Activated CD4-positive, alpha-beta T cell treated with anti-CD3 and anti-CD28 coated beads for 36 hours (primary cell): ENCODE measurements at regions of chr3 and their contacts with region 1.

Region 1: GRCh38 chr3:31253782-31254181 is 278.9 kb upstream of the STT3B start:
- DNase-seq: peak; percentile 65
- ATAC-seq: peak; percentile 45
- H3K4me3 Mint-ChIP-seq: peak overlapping the region; percentile 24
- H3K27ac Mint-ChIP-seq: peak overlapping the region; percentile 99
- H3K4me1 Mint-ChIP-seq: peaks cover 57% of the 10 kb centered on the region
- H3K27me3 Mint-ChIP-seq: peaks cover 4% of the 10 kb centered on the region

Region 2: DNA sequence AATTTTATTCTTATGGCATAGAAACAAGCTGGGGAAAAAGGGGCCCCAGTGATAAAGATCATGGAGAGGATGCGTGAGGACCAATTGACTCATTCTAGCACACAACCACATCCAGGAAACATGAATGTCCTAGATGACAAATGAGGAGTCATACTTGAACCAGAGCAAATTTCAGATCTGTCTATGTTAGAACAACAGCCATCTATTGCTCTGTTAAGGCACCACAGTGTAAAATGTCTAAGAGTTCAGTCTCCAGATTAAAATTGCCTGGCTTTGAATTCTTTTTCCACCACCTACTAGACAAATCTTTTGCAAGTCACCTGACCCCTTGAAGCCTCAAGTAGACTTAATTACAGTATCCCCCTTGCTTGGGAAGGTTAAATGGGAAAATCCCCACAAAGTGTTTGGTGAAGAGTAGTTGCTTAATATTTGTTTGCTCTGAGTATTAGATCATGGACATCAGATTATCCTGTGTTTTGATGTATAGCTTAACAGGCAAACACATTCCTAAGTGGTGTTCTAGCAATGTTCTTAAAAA is 906.0 kb before region 1 on chr3:
- CTCF ChIA-PET with region 1: no interaction called
- POLR2A ChIA-PET with region 1: no interaction called
- intact Hi-C with region 1: loop called in 1 of 2 experiments (anchors 2 kb)
- DNase-seq: peak; percentile 67
- ATAC-seq: peak; percentile 97
- H3K4me3 Mint-ChIP-seq: no peak overlapping the region
- H3K27ac Mint-ChIP-seq: peak overlapping the region; percentile 82
- H3K4me1 Mint-ChIP-seq: peaks cover 85% of the 10 kb centered on the region
- H3K27me3 Mint-ChIP-seq: peaks cover 8% of the 10 kb centered on the region

Region 3: DNA sequence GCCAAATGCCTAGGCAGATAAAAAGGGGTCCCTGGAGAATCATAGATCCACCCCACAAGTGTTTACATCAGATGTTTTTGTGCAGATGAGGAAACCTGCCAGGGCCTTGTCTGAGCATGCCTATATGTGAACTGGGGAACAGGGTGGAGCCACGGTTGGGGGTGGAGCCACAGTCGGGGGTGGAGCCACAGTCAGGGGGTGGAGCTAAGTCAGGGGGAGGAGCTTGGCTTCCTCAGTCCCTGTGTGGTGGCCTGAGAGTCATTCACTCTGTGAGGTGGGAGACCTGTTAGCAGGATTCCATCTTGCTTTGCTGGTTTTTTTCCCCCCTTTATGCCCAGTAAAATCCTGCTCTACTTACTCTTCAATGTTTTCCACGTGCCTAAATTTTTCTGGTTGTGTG is 705.2 kb before region 1 on chr3:
- CTCF ChIA-PET with region 1: no interaction called
- POLR2A ChIA-PET with region 1: no interaction called
- intact Hi-C with region 1: no loop called
- DNase-seq: peak; percentile 68
- ATAC-seq: peak; percentile 96
- H3K4me3 Mint-ChIP-seq: no peak overlapping the region
- H3K27ac Mint-ChIP-seq: no peak overlapping the region
- H3K4me1 Mint-ChIP-seq: peaks cover 41% of the 10 kb centered on the region
- H3K27me3 Mint-ChIP-seq: no peaks in the 10 kb centered on the region

Region 4: GRCh38 chr3:30606301-30607031 is 647.3 kb before region 1 on chr3 and contains the start of gene TGFBR2:
- CTCF ChIA-PET with region 1: no interaction called
- POLR2A ChIA-PET with region 1: no interaction called
- intact Hi-C with region 1: no loop called
- DNase-seq: peak; percentile 94
- ATAC-seq: peak; percentile 70
- H3K4me3 Mint-ChIP-seq: peak within 1 kb of the TSS; percentile 99
- H3K27ac Mint-ChIP-seq: peak within 1 kb of the TSS; percentile 95
- H3K4me1 Mint-ChIP-seq: peaks cover 60% of the 10 kb centered on the region
- H3K27me3 Mint-ChIP-seq: no peaks in the 10 kb centered on the region
- total RNA-seq, gene TGFBR2: 45.5 to 46.6 TPM

Region 5: GRCh38 chr3:30878862-30879261 is 374.9 kb before region 1 on chr3:
- CTCF ChIA-PET with region 1: no interaction called
- POLR2A ChIA-PET with region 1: no interaction called
- intact Hi-C with region 1: no loop called
- DNase-seq: no peak
- ATAC-seq: no peak
- H3K4me3 Mint-ChIP-seq: no peak overlapping the region
- H3K27ac Mint-ChIP-seq: no peak overlapping the region
- H3K4me1 Mint-ChIP-seq: no peaks in the 10 kb centered on the region
- H3K27me3 Mint-ChIP-seq: peaks cover 2% of the 10 kb centered on the region

Region 6: GRCh38 chr3:31077021-31077601 is 176.7 kb before region 1 on chr3:
- CTCF ChIA-PET with region 1: interaction called, 4 read pairs
- POLR2A ChIA-PET with region 1: no interaction called
- intact Hi-C with region 1: loop called (anchors 1 kb)
- DNase-seq: peak; percentile 68
- ATAC-seq: peak; percentile 98
- H3K4me3 Mint-ChIP-seq: no peak overlapping the region
- H3K27ac Mint-ChIP-seq: peak overlapping the region; percentile 52
- H3K4me1 Mint-ChIP-seq: peaks cover 26% of the 10 kb centered on the region
- H3K27me3 Mint-ChIP-seq: peaks cover 5% of the 10 kb centered on the region

Region 7: DNA sequence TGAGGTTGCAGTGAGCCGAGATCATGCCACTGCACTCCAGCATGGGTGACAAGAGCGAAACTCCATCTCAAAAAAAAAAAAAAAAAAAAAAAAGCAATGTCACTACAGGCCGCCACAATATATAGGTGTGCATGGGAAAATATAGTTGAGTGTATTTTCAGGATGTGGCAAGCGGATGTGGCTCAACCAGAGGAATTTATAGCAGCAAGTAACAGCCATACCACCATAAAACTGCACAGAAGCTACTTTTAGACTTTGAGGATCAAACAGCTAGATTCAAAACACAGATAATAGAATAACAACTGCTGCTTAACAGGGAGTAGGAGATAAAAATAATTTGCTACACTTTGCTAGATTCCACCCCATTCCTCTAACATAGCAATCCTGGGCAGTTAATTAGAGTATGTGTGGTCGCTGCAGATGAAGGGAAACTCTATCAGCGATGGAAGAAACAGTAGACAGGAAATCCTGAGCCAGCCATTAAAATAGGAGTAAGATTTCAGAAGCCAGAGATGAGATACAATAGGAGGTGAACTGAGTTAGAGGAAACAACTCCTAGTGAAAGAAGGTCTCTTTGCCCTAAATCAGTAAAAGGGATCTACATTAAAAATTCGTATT is 39.8 kb before region 1 on chr3:
- CTCF ChIA-PET with region 1: interaction called, 3 read pairs
- POLR2A ChIA-PET with region 1: no interaction called
- intact Hi-C with region 1: loop called (anchors 1 to 2 kb)
- DNase-seq: peak; percentile 48
- ATAC-seq: peak; percentile 4
- H3K4me3 Mint-ChIP-seq: no peak overlapping the region
- H3K27ac Mint-ChIP-seq: peak overlapping the region; percentile 82
- H3K4me1 Mint-ChIP-seq: peaks cover 90% of the 10 kb centered on the region
- H3K27me3 Mint-ChIP-seq: no peaks in the 10 kb centered on the region

Region 8: GRCh38 chr3:31232055-31233025 is 21.4 kb before region 1 on chr3:
- CTCF ChIA-PET with region 1: interaction called, 4 read pairs
- POLR2A ChIA-PET with region 1: no interaction called
- intact Hi-C with region 1: loop called in 1 of 2 experiments (anchors 2 kb)
- DNase-seq: no peak
- ATAC-seq: no peak
- H3K4me3 Mint-ChIP-seq: no peak overlapping the region
- H3K27ac Mint-ChIP-seq: peak overlapping the region; percentile 73
- H3K4me1 Mint-ChIP-seq: peaks cover 72% of the 10 kb centered on the region
- H3K27me3 Mint-ChIP-seq: no peaks in the 10 kb centered on the region

Region 9: DNA sequence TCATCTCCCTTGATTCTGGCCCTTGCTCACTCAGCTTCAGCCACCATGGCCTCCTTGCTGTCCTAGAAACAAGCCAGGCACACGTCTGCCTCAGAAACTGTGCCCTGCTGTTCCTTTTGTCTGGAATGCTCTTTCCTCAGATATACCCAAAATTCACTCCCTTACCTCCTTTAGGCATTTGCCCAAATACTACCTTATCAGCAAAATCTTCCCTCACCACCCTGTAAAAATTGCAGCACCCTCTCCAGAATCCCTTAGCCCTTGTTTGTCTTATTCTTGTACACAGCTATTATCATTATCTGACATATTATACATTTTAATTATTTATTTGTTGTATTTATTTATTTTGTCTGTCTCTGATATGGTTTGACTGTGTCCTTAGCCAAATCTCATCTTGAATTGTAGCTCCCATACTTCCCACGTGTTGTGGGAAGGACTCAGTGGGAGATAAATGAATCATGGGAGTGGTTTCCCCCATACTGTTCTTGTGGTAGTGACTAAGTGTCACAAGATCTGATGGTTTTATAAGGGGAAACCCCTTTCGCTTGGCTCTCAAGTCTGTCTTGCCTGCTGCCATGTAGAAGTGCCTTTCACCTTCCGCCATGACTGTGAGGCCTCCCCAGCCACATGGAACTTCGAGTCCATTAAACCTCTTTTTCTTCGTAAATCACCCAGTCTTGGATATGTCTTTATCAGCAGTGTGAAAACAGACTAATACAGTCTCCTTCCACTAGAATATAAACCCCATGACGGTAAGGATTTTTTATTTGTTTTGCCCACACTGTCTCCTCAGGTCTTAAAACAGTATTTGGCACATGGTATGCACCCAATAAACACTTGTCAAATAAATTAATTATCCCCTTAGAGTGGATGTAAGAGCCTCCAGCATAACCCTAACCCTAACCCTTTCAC is 219.0 kb after region 1 on chr3:
- CTCF ChIA-PET with region 1: no interaction called
- POLR2A ChIA-PET with region 1: no interaction called
- intact Hi-C with region 1: loop called (anchors 2 to 5 kb)
- DNase-seq: peak; percentile 65
- ATAC-seq: peak; percentile 95
- H3K4me3 Mint-ChIP-seq: no peak overlapping the region
- H3K27ac Mint-ChIP-seq: peak overlapping the region; percentile 41
- H3K4me1 Mint-ChIP-seq: peaks cover 19% of the 10 kb centered on the region
- H3K27me3 Mint-ChIP-seq: no peaks in the 10 kb centered on the region